ENCODE measurements at regions of chr4 and their contacts with region 1.

Region 1: DNA sequence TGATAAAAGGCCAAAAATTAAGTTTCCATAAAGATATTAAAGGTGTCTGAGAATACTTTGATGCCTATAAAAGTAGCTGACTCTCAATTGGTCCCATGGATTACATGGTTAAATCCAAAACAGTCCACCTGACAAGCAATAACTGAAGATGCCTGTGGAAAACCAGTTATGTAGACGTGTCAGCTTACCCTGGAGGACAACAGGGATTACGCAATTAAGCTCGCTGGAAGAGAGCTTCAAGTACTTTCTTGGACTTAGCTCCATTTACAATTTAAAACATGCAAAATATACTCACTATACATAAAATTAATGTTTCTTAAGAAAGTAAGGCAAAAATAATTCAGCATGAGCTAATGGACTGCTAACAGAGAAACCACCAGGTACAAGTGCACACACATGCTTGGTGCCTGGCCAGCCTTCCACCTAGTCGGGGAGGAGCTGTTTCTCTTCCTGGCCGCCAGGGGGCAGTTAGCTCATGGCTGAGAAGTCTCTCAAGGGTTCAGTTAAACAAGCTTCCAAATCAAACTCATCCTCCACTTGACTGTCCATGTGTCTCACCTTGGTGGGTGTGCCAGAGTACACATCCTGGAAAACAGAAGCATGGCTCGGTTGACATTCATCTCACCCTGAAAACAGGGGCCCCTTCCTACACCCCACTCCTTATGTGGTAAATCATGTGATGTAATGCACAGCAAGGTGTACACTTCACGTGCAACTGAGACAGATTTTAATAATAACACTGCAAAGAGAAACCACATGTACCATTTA is 9.2 kb upstream of the FAM53A start:
- DNase-seq: peak; percentile 58
- H3K4me3 ChIP-seq: no peak overlapping the region
- H3K27ac ChIP-seq: no peak overlapping the region
- H3K4me1 ChIP-seq: no peaks in the 10 kb centered on the region
- H3K27me3 ChIP-seq: no peaks in the 10 kb centered on the region
- CTCF ChIP-seq: peak; percentile 93

Region 2: GRCh38 chr4:1614854-1615634 is 78.3 kb before region 1 on chr4:
- intact Hi-C with region 1: no loop called
- DNase-seq: no peak
- H3K4me3 ChIP-seq: no peak overlapping the region
- H3K27ac ChIP-seq: no peak overlapping the region
- H3K4me1 ChIP-seq: peaks cover 8% of the 10 kb centered on the region
- H3K27me3 ChIP-seq: no peaks in the 10 kb centered on the region
- CTCF ChIP-seq: no peak

Region 3: GRCh38 chr4:1726146-1726934 is 33.0 kb after region 1 on chr4:
- intact Hi-C with region 1: loop called (anchors 5 kb)
- DNase-seq: peak; percentile 90
- H3K4me3 ChIP-seq: no peak overlapping the region
- H3K27ac ChIP-seq: peak overlapping the region; percentile 75
- H3K4me1 ChIP-seq: peaks cover 50% of the 10 kb centered on the region
- H3K27me3 ChIP-seq: no peaks in the 10 kb centered on the region
- CTCF ChIP-seq: no peak

Region 4: DNA sequence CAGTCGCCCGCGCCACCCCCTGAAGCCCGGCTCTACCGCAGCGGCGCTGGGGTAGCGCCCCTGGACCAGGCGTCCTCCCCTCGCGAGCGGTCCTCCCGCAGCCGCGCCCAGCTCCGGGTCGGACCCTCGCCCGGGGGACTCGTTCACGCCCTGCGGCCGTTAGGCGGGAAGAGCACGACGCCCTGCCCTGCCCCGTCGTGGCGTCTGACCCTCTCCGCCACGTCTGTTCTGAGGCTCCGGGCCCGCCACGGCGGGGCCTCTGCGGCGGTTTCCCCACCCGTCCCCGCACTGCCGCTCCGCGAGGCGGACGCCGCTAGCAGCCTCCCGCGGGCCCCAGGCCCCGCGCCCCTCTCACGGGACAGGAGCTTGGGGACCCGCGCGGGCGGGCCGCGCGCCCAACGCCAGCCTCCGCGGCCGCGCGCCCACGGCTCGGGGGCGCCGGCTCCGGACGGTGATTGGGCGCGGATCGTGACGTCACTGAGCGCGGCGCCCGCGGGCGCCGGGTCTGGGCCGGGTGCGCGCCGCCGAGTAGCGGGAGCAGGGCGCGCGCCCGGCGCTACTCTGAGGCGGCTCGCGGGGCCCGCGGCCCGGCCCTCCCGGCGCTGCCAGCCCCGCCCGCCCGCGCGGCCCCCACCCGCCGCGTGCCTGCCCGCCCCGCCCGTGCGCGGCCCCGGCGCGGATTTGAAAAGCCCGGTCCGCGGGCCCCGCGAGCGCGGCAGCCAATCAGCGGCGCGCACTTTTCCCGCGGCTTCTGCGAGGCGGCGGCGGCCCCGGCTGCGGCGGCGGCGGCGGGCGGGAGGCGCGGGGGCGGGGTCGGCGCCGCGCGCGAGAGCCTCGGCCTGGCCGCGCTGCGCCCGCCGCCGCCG is 177.5 kb after region 1 on chr4 and contains the start of gene NSD2:
- intact Hi-C with region 1: no loop called
- DNase-seq: peak; percentile 94
- H3K4me3 ChIP-seq: peak within 1 kb of the TSS; percentile 97
- H3K27ac ChIP-seq: peak within 1 kb of the TSS; percentile 100
- H3K4me1 ChIP-seq: peaks cover 34% of the 10 kb centered on the region
- H3K27me3 ChIP-seq: peaks cover 22% of the 10 kb centered on the region
- CTCF ChIP-seq: no peak
- total RNA-seq, gene NSD2: 42.5 TPM

Region 5: GRCh38 chr4:1939664-1940509 is 246.6 kb after region 1 on chr4:
- intact Hi-C with region 1: no loop called
- DNase-seq: no peak
- H3K4me3 ChIP-seq: no peak overlapping the region
- H3K27ac ChIP-seq: peak overlapping the region; percentile 68
- H3K4me1 ChIP-seq: peaks cover 20% of the 10 kb centered on the region
- H3K27me3 ChIP-seq: no peaks in the 10 kb centered on the region
- CTCF ChIP-seq: no peak

Measured in left ventricle myocardium inferior (tissue), 1 donor.